Activated T-helper 1 cell treated with anti-CD3 and anti-CD28 coated beads, Interleukin-12 subunit alpha, Interleukin-12 subunit beta, Interleukin-2, Interleukin-4 antibody, amounts not matched to agents 30 ng/mL and 10 ng/mL and 1 ng/mL, durations not matched to agents 14 hours and 24 hours and 36 hours (primary cell): ENCODE measurements at regions of chr16 and their contacts with region 1.

Region 1: GRCh38 chr16:1420111-1420540 is 421 bp downstream of the UQCC4 start:
- DNase-seq: no peak
- H3K4me3 Mint-ChIP-seq: peak overlapping the region; percentile 91
- H3K27ac Mint-ChIP-seq: peak overlapping the region; percentile 100
- H3K4me1 Mint-ChIP-seq: peaks cover 5% of the 10 kb centered on the region
- H3K27me3 Mint-ChIP-seq: peaks cover 3% of the 10 kb centered on the region

Region 2: GRCh38 chr16:788394-789126 is 631.6 kb before region 1 on chr16 and contains the start of gene CHTF18:
- intact Hi-C with region 1: loop called (anchors 5 kb)
- DNase-seq: peak; percentile 92
- H3K4me3 Mint-ChIP-seq: peak within 1 kb of the TSS; percentile 92
- H3K27ac Mint-ChIP-seq: peak within 1 kb of the TSS; percentile 79
- H3K4me1 Mint-ChIP-seq: no peaks in the 10 kb centered on the region
- H3K27me3 Mint-ChIP-seq: no peaks in the 10 kb centered on the region
- total RNA-seq, gene CHTF18: 142 and 154 TPM in 2 replicates

Region 3: GRCh38 chr16:1342526-1343427 is 77.3 kb before region 1 on chr16:
- intact Hi-C with region 1: loop called (anchors 2 kb)
- DNase-seq: peak; percentile 89
- H3K4me3 Mint-ChIP-seq: peak overlapping the region; percentile 45
- H3K27ac Mint-ChIP-seq: peak overlapping the region; percentile 18
- H3K4me1 Mint-ChIP-seq: peaks cover 15% of the 10 kb centered on the region
- H3K27me3 Mint-ChIP-seq: peaks cover 2% of the 10 kb centered on the region

Region 4: DNA sequence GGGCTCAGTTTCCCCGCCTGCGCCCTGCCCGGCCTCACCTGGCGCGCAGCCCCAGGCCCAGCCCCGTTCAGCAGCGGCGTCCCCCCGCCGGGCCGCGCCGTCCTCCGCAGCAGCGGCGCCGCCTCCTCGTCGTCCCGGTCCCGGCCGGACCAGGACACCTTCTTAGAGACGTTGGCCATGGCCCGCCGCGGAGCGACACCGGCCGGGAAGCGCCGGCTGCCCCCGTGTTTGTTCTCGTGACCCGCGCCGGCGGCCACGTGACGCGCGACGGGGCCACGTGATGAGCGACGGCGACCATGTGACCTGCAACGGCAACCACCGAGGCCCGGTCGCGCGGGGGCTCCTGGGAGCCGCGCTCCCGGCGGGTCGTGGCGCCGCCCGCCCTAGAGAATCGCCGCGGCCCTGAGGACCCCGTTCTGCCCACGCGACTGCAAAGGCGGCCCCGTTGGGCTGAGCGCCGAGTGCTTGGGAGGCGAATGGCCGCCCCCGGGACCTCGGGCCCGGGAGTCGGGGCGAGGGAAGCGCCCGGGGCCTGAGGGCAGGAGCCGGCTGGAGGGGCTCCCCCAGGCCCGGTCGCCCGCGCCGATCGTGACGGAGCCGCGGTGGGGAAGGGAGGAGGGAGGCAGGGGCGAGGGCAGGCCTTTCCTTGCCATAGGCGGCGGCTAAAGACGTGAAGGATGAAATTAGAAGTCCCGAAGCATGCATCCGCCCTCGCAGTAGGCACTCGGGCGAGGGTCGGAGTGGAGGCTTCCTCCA is 54.8 kb after region 1 on chr16 and contains the start of gene CLCN7:
- intact Hi-C with region 1: loop called (anchors 2 kb)
- DNase-seq: peak; percentile 89
- H3K4me3 Mint-ChIP-seq: peak within 1 kb of the TSS; percentile 83
- H3K27ac Mint-ChIP-seq: peak within 1 kb of the TSS; percentile 89
- H3K4me1 Mint-ChIP-seq: peaks cover 6% of the 10 kb centered on the region
- H3K27me3 Mint-ChIP-seq: peaks cover 2% of the 10 kb centered on the region
- total RNA-seq, gene CLCN7: 61.7 and 68.7 TPM in 2 replicates

Region 5: DNA sequence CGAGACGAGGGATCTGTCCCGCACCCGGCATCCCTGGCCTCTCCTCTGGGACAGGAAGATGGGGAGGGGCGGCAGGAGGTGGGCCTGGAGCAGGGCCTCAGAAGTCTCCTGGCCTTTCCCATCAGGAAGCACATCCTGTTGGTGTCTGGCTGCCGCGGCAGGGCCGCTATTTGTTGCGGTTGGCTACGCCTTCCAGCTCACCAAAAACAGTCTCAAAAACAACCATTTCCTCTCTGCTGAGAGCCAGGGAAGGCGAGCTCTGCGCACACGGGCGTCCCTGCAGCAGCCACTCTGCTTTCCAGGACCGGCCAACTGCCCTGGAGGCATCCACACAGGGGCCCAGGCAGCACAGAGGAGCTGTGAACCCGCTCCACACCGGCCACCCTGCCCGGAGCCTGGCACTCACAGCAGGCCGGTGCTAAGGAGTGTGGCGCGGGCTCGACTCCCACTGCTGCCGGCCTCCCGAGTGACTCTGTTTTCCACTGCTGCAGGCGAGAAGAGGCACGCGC is 113.4 kb after region 1 on chr16 and contains the start of gene TMEM204:
- intact Hi-C with region 1: loop called (anchors 2 kb)
- DNase-seq: peak; percentile 47
- H3K4me3 Mint-ChIP-seq: peak within 1 kb of the TSS; percentile 98
- H3K27ac Mint-ChIP-seq: peak within 1 kb of the TSS; percentile 92
- H3K4me1 Mint-ChIP-seq: peaks cover 44% of the 10 kb centered on the region
- H3K27me3 Mint-ChIP-seq: peaks cover 2% of the 10 kb centered on the region
- total RNA-seq, gene TMEM204: 22.8 and 23.7 TPM in 2 replicates

Region 6: GRCh38 chr16:1782352-1783091 is 362.4 kb after region 1 on chr16 and contains the starts of genes NUBP2 and SPSB3:
- intact Hi-C with region 1: loop called (anchors 1 kb)
- DNase-seq: peak; percentile 99
- H3K4me3 Mint-ChIP-seq: peak within 1 kb of the TSS; percentile 93
- H3K27ac Mint-ChIP-seq: peak within 1 kb of the TSS; percentile 81
- H3K4me1 Mint-ChIP-seq: no peaks in the 10 kb centered on the region
- H3K27me3 Mint-ChIP-seq: no peaks in the 10 kb centered on the region
- total RNA-seq, gene NUBP2: 81.6 and 82.8 TPM in 2 replicates
- total RNA-seq, gene SPSB3: 30.3 and 30.8 TPM in 2 replicates

Region 7: DNA sequence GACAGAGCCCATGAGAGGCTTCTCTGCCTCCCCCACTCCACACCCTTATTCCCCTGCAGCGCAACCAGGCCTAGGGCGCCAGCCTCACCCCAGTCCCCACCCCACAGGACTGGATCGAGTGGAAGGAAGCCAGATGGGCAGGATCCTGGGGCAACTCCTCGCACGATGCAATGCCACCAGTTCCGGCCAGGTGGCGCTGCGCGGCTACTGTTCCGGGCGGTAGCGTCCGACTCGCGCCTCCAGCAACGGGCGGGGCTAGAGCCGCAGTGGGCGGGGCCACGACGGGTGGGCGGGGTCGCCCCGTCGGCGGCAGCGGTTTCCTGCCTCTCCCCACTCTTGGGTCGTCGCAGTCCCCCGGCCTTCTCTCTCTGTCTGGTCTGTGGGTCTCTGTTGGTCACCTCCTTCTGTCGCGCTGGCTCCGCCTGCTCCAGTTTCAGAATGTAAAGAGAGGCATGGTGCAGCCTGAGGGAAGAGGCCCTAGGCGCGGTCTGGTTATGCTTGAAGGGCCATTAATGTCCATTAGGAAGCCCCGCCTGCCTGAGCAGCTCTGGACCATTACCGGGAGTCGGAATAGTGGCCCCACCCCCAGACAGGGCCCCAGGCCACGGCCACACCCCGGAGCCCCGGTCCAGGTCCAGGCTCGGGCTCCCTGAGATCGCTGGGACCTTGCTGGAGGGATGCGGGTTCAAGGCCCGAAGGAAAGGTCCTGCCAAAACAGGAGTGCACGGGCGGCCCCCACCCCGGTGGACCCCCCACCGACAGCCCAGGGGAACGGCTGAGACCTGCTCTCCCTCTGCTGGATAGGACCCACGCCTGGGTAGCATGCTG is 603.2 kb after region 1 on chr16:
- intact Hi-C with region 1: no loop called
- DNase-seq: peak; percentile 92
- H3K4me3 Mint-ChIP-seq: peak overlapping the region; percentile 77
- H3K27ac Mint-ChIP-seq: no peak overlapping the region
- H3K4me1 Mint-ChIP-seq: peaks cover 16% of the 10 kb centered on the region
- H3K27me3 Mint-ChIP-seq: peaks cover 37% of the 10 kb centered on the region

Region 8: GRCh38 chr16:2223375-2224182 is 803.5 kb after region 1 on chr16 and contains the start of gene E4F1:
- intact Hi-C with region 1: loop called (anchors 2 kb)
- DNase-seq: peak; percentile 99
- H3K4me3 Mint-ChIP-seq: peak within 1 kb of the TSS; percentile 87
- H3K27ac Mint-ChIP-seq: peak within 1 kb of the TSS; percentile 77
- H3K4me1 Mint-ChIP-seq: peaks cover 9% of the 10 kb centered on the region
- H3K27me3 Mint-ChIP-seq: no peaks in the 10 kb centered on the region
- total RNA-seq, gene E4F1: 35.6 and 37.4 TPM in 2 replicates